Panc1 (cell line): ENCODE measurements at regions of chr12 and their contacts with region 1.

Region 1: GRCh38 chr12:75666126-75666938 is 154.9 kb upstream of the KRR1 start:
- DNase-seq: no peak
- ATAC-seq: peak; percentile 62
- H3K4me3 ChIP-seq: no peak overlapping the region
- H3K27ac ChIP-seq: peak overlapping the region; percentile 94
- H3K4me1 ChIP-seq: peaks cover 40% of the 10 kb centered on the region
- H3K27me3 ChIP-seq: no peaks in the 10 kb centered on the region
- CTCF ChIP-seq: no peak

Region 2: DNA sequence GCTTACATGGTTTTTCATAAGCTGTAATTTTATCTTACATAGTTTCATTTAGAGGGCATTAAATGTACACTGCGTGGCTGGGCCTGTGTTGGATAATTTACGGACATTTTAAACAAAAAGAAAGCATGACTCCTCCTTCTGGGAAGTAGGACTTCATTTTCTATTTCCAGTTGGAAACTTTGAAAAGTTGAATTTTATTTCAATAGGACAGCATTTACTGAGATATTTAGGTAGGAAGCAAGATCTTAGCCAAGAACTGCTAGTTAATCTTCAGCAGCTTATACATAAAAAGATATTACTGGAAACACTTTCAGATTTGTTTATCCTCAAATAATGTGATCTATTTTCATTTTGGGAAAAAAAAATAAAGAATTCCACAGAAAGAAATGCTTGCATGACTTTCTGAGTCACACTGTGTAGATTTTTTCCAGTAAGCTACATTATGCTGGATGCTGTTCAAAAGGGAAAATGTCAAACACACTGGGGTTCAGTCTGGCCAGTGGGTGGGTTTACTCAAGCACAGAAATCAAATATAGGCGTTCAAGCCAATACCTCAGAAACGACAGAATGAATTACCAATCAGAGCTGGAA is 84.5 kb after region 1 on chr12:
- CTCF ChIA-PET with region 1: no interaction called
- POLR2A ChIA-PET with region 1: interaction called, 11 read pairs
- in situ Hi-C with region 1: no loop called
- intact Hi-C with region 1: no loop called
- DNase-seq: no peak
- ATAC-seq: no peak
- H3K4me3 ChIP-seq: no peak overlapping the region
- H3K27ac ChIP-seq: peak overlapping the region; percentile 84
- H3K4me1 ChIP-seq: no peaks in the 10 kb centered on the region
- H3K27me3 ChIP-seq: no peaks in the 10 kb centered on the region
- CTCF ChIP-seq: no peak